Left cardiac atrium (tissue), 4 donors: ENCODE measurements at regions of chr3 and their contacts with region 1.

Region 1: GRCh38 chr3:54356261-54357045 is 234.1 kb downstream of the CACNA2D3 start:
- DNase-seq: peak; percentile 42
- ATAC-seq: peak; percentile 79 to 82

Region 2: GRCh38 chr3:54213910-54214309 is 142.5 kb before region 1 on chr3:
- intact Hi-C with region 1: loop called in 1 of 2 experiments (anchors 5 kb)
- DNase-seq: peak; percentile 39
- ATAC-seq: peak; percentile 19 to 84

Region 3: DNA sequence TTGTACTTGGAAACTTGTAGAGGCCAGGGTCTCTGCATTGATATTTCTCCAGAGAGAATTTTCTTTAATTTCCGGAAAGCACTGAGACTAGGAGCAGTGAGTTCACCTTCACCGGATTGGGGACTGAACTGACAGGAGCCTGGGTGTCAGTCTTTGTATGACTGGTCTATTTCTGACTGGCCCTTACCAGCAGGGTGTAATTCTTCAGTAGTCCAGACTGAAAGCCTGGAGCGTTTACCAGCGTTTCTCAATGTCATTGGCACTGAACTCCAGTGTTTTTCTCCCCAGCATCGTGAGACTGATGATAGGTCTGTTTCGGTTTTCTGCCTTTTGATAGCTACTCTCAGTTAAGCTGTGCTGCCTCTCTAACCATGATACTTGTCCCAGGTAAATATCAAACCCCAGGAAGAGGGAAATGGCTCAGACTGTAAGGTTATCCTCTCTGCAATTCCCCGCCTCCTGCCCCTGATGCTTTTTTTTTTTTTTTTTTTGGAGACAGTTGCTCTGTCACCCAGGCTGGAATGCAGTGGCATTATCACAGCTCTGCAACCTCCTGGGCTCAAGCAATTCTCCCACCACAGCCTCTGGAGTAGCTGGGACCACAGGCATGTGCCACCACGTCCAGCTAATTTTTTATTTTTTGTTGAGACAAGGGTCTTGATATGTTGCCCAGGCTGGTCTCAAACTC is 130.5 kb before region 1 on chr3:
- intact Hi-C with region 1: no loop called
- DNase-seq: no peak
- ATAC-seq: peak; percentile 88 to 89

Region 4: DNA sequence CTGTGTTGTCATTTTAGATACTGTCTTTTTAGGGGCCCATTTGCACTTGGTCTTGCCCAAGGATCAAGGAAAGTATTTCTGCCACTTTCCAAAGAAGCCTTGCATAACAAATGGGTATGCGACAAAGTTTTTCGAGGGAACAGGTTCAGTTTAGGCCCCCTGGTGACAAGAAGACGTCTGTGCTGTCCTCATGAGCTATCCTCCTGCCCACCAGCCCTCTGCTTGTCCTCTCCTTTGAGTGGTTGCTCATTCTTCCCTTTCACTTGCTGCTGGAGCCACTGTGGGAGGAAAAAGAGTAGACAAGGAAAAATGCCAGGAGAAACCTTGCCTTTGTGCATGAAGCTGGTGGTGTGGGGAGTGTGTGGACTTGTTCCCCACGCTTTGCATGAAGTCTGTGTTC is 62.2 kb before region 1 on chr3:
- intact Hi-C with region 1: no loop called
- DNase-seq: no peak
- ATAC-seq: no peak